Esophagus squamous epithelium (tissue), 5 donors: ENCODE measurements at regions of chr13 and their contacts with region 1.

Region 1: DNA sequence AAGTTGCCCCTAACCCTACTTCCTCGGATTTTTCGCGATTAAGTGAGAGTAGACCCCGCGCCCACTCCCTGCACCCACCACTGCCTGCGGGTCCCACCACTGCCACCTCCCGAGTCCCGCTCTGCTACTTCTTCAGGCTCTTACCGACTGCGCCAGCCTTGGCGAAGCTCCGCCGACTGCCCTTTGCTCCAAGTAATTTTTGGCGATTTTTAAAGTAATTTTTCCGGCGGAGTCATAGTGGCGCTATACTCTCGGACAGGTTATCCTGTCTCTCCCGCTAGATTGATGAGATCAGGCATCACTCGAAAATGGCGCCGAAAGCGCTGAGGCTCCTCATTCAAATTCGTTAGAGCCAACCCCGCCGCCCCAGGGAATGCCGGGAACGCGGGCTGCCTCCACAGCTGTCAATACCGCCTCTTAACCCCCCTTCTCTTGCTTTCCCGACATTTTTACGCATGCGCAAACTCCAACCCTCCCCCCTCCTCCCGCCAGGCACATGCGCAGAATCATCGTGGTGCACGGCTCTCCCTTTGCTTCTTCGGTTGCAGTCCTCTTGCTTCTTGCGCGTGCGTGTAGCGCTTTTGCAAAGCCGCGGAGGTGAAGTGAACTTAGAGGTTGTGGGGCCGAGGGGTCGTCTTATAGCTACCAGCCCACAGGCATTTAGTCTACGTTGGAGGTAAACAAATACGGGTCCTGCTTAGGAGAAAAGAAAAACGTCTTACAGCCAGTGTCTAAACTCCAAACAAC is 66.6 kb downstream of the KCNRG start:
- DNase-seq: peak; percentile 92
- H3K4me3 ChIP-seq: peak overlapping the region; percentile 75 to 84 (median 78)
- H3K27ac ChIP-seq: peak overlapping the region; percentile 92 to 98 (median 94)
- H3K4me1 ChIP-seq: peaks cover 8 to 64% (median 10%) of the 10 kb centered on the region in 3 donors
- H3K27me3 ChIP-seq: peaks cover 0 to 29% (median 0%) of the 10 kb centered on the region in 4 donors
- CTCF ChIP-seq: peak in 2 of 6 experiments; percentile 16 to 23
- POLR2A ChIP-seq: peak in 3 of 4 donors; percentile 6 to 58 (median 38)

Region 2: GRCh38 chr13:49996951-49997895 is 84.6 kb before region 1 on chr13 and contains the start of gene TRIM13:
- intact Hi-C with region 1: loop called (anchors 2 kb)
- DNase-seq: peak; percentile 78
- H3K4me3 ChIP-seq: peak within 1 kb of the TSS; percentile 88 to 98 (median 94)
- H3K27ac ChIP-seq: peak within 1 kb of the TSS; percentile 99 to 100 (median 99)
- H3K4me1 ChIP-seq: peaks cover 11 to 58% (median 24%) of the 10 kb centered on the region in 3 donors
- H3K27me3 ChIP-seq: no peaks in the 10 kb centered on the region
- CTCF ChIP-seq: peak; percentile 65 to 77 (median 69)
- POLR2A ChIP-seq: peak in 2 of 4 donors; percentile 46 to 54
- total RNA-seq, gene TRIM13: 22.8 to 28.8 (median 26.5) TPM

Region 3: GRCh38 chr13:50123862-50124536 is 42.1 kb after region 1 on chr13:
- intact Hi-C with region 1: loop called (anchors 5 kb)
- DNase-seq: peak; percentile 93
- H3K4me3 ChIP-seq: peak overlapping the region; percentile 64 to 96 (median 80)
- H3K27ac ChIP-seq: peak overlapping the region; percentile 93 to 100 (median 99)
- H3K4me1 ChIP-seq: peaks cover 11 to 50% (median 26%) of the 10 kb centered on the region in 3 donors
- H3K27me3 ChIP-seq: peaks cover 0 to 27% (median 2%) of the 10 kb centered on the region in 4 donors
- CTCF ChIP-seq: peak in 3 of 6 experiments; percentile 1 to 21 (median 11)
- POLR2A ChIP-seq: peak in 3 of 4 donors; percentile 74 to 96 (median 93)

Region 4: GRCh38 chr13:50529154-50529882 is 447.5 kb after region 1 on chr13:
- intact Hi-C with region 1: loop called (anchors 10 kb)
- DNase-seq: no peak
- H3K4me3 ChIP-seq: peak overlapping the region in 1 of 4 donors; percentile 23
- H3K27ac ChIP-seq: peak overlapping the region in 3 of 4 donors; percentile 23 to 54 (median 30)
- H3K4me1 ChIP-seq: peaks cover 15 to 36% (median 18%) of the 10 kb centered on the region in 3 donors
- H3K27me3 ChIP-seq: no peaks in the 10 kb centered on the region
- CTCF ChIP-seq: no peak
- POLR2A ChIP-seq: no peak

Region 5: DNA sequence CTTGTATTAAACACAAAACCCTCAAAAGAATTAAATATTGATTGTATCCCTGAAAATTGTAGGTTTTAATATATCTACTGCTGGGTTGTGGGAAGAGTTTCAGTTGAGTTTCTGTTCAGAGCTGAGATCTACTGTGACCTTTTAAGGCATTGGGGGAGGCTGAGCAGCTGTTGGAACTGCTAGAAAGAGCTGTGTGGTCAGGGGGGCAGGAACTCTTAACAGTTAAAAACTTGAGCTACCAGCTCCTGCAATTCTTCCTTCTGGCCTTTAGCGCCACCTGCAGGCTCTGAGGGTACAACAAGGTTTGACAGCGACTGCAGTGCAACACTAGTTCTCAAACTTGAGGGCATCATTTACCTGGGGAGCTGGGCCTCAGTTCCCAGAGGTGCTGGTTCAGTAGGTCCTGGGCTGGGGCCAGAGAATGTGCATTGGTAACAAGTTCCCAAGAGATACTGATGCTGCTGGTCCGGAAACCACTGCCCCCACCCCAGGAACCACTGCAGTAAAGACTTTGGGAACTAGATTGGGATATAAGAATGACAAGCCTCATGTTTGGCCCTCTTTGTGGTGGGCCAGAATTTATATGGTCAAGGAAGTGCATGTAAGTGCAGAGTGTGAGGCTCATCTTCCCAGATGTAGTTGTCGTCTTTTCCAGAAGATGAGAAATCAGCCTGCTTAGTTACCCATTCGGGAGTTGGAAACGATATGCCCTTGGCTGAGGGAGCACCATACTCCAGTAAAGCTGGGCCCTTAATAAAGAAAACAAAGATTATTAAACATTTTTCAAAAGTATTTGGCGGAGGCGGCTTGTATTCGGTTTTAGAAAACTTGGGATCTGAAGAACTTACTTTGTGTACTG is 830.3 kb after region 1 on chr13:
- intact Hi-C with region 1: loop called (anchors 10 kb)
- DNase-seq: peak; percentile 31
- H3K4me3 ChIP-seq: peak overlapping the region in 1 of 4 donors; percentile 9
- H3K27ac ChIP-seq: peak overlapping the region in 3 of 4 donors; percentile 91 to 95 (median 92)
- H3K4me1 ChIP-seq: peaks cover 13 to 59% (median 23%) of the 10 kb centered on the region in 3 donors
- H3K27me3 ChIP-seq: no peaks in the 10 kb centered on the region
- CTCF ChIP-seq: peak; percentile 69 to 91 (median 83)
- POLR2A ChIP-seq: no peak